ENCODE measurements at regions of chr2 and their contacts with region 1.

Region 1: DNA sequence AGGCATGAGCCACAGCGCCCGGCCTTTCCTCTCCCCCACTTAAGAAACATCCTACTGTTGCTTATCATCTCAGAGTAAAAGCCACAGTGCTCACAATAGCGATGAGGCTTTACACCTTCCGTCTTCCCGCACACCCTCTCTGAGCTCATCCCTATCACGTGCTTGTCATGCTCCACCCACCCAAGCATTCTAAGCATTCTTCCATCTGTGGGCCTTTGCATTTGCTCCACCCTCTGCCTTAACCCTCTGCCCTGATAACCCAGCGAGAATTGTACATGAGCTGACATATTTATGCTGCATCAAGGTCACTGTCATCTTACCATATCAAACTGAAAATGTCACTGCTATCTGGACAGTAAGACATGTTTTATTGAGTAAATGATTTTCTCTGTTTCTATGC is 22.6 kb downstream of the FOXI3 start:
- DNase-seq: no peak

Region 2: DNA sequence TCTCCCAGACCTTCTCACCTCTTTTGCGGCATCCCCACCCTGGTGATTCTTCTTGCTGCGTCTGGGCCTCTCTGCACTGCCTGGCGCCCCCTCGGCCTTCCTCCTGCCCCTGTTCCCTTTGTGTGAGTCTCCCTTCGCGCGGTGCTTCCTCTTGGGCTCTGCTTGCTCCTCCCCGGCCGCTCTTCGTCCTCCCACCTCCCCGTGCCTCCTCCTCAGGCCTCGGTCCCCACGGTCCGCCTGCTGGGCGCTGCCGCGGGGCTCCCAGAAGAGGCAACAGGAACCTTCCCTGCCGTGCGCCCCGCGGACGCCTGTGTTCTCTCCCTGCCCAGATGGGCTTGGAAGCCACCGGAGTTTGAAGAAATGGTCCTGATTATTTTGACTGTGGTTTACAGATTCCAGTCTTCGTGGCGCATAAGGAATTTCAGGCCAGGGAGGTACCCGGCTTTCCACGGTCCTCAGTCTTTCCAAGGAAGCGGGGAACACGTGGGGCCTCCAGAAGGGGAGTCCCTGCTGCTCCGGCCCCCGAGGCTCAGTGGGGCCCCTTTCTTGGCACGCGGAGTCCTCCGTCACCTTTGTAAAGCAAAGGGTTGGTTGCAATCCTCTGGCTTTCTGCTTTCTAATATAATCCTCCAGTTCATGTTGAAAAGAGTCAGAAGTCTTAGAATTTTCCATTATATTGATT is 426.7 kb before region 1 on chr2:
- intact Hi-C with region 1: no loop called
- DNase-seq: no peak

Region 3: DNA sequence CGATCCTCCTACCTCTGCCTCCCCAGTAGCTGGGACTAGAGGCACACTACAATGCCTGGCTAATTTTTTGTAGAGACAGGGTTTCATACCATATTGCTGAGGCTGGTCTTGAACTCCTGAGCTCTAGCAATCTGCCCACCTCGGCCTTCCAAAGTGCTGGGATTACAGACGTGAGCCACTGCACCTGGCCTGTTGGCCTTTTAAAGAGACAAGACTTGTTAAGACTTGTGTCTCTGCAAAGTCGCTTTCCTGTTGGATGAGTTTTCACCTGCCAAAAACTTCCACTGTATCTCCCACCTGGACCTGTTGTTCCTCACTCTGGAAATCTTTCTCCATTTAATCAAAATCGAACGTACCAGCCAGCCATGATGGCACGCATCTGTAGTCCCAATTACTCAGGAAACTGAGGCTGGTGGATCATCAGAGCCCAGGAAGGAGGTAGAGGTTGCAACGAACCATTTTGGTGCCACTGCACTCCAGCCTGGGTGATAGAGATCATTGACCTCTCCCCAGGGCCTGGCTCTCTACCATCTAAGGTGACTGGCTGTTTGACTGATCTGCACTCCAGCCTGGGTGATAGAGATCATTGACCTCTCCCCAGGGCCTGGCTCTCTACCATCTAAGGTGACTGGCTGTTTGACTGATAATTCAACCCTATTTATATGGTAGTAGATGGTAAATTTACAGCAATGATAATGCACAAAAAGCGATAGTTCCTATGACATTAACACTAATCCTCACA is 21.2 kb before region 1 on chr2:
- intact Hi-C with region 1: no loop called
- DNase-seq: no peak

Region 4: GRCh38 chr2:88582030-88582429 is 152.1 kb after region 1 on chr2:
- intact Hi-C with region 1: loop called in 1 of 2 experiments (anchors 5 kb)
- DNase-seq: no peak

Region 5: GRCh38 chr2:88600038-88600465 is 170.1 kb after region 1 on chr2:
- intact Hi-C with region 1: no loop called
- DNase-seq: no peak

Region 6: DNA sequence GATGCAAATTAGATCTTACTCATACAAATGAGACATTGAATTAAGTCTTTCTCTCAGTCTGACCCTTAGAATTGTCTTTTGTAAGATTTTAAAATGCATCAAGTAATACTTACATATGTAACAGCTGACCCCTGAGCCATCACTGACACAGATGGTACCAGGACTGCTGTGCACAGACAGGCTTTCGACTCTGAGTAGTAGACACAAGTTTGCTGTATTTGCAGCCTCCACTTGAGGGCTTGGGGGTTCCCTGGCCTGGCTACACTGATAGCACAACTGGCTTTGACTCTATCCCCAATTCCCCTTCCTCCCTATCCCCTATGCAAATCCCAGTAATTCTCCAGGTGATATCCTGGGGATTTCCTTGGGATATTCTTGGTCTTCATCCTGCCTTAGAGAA is 462.3 kb after region 1 on chr2:
- intact Hi-C with region 1: no loop called
- DNase-seq: no peak

Measured in posterior vena cava (tissue), 2 donors.